ENCODE measurements at regions of chr14 and their contacts with region 1.

Region 1: DNA sequence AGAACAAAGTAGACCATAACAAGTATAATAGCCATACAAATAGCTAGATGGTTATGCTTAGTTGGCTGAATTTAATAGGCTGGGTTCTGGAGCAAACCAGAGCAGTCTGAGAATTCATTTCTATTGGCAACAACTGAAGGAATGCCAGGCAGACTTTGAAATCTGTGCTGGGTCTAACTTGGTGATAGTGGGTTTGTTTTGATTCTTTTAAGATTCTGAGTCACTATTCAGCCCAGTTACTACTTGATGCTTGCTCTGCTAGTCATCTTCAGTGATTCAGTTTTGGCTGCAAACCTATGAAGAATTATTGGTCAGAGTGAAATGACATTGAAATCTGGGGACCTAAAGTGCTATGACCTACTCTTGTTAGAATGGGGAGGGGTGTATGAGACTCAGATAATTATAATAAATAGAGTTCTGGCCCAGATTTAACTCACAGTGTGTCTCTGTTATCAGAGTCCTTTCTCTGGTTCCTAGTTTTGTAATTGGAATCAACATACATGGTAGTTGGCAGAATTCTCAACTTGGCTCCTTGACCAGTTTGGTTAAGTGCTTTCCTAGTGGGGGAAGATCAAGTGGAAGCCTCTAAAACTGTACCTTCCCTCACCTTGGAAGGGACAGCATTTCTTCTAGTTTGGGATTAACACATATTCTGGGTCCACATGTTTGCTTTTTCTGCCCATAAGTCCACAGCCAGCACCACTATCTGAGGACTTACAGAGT is 43.5 kb downstream of the MNAT1 start:
- DNase-seq: peak; percentile 91
- ATAC-seq: peak; percentile 76
- H3K4me3 ChIP-seq: no peak overlapping the region
- H3K27ac ChIP-seq: peak overlapping the region; percentile 15
- H3K4me1 ChIP-seq: peaks cover 44% of the 10 kb centered on the region
- H3K27me3 ChIP-seq: no peaks in the 10 kb centered on the region
- CTCF ChIP-seq: no peak

Region 2: GRCh38 chr14:60931218-60931617 is 153.2 kb after region 1 on chr14:
- CTCF ChIA-PET with region 1: no interaction called
- POLR2A ChIA-PET with region 1: no interaction called
- intact Hi-C with region 1: loop called (anchors 5 kb)
- DNase-seq: no peak
- ATAC-seq: peak; percentile 57
- H3K4me3 ChIP-seq: no peak overlapping the region
- H3K27ac ChIP-seq: no peak overlapping the region
- H3K4me1 ChIP-seq: no peaks in the 10 kb centered on the region
- H3K27me3 ChIP-seq: no peaks in the 10 kb centered on the region
- CTCF ChIP-seq: no peak

Measured in PC-3 (cell line).